ENCODE measurements at regions of chr2 and their contacts with region 1.

Region 1: DNA sequence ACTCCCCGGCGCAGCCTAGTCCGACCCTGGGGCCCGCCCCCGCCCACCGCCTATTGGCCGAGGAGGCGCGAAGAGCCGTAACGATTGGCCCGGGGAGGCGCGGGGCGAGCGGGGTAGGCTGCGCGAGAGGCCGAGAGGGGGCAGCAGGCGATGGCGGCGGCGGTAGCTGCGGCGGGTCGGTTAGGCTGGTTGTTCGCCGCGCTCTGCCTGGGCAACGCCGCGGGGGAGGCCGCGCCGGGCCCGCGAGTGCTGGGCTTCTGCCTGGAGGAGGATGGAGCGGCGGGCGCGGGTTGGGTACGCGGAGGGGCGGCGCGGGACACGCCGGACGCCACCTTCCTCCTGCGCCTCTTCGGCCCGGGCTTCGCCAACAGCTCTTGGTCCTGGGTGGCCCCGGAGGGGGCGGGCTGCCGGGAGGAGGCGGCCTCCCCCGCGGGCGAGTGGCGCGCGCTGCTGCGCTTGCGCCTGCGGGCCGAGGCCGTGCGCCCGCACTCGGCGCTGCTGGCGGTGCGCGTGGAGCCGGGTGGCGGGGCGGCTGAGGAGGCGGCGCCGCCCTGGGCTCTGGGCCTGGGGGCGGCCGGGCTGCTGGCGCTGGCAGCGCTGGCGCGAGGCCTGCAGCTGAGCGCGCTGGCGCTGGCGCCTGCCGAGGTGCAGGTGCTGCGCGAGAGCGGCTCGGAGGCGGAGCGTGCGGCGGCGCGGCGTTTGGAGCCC is at the start of gene CNNM3:
- DNase-seq: peak; percentile 93 to 97 (median 94)
- H3K4me3 ChIP-seq: peak within 1 kb of the TSS; percentile 82 to 83
- H3K4me3 Mint-ChIP-seq: peak within 1 kb of the TSS; percentile 93 to 97 (median 95)
- H3K27ac ChIP-seq: peak within 1 kb of the TSS; percentile 77
- H3K27ac Mint-ChIP-seq: peak within 1 kb of the TSS; percentile 74 to 96 (median 93)
- H3K4me1 ChIP-seq: peaks cover 57% of the 10 kb centered on the region
- H3K4me1 Mint-ChIP-seq: peaks cover 50 to 76% (median 61%) of the 10 kb centered on the region in 4 donors
- H3K27me3 ChIP-seq: no peaks in the 10 kb centered on the region
- H3K27me3 Mint-ChIP-seq: no peaks in the 10 kb centered on the region
- total RNA-seq, gene CNNM3: 55.1 to 57.4 TPM

Region 2: DNA sequence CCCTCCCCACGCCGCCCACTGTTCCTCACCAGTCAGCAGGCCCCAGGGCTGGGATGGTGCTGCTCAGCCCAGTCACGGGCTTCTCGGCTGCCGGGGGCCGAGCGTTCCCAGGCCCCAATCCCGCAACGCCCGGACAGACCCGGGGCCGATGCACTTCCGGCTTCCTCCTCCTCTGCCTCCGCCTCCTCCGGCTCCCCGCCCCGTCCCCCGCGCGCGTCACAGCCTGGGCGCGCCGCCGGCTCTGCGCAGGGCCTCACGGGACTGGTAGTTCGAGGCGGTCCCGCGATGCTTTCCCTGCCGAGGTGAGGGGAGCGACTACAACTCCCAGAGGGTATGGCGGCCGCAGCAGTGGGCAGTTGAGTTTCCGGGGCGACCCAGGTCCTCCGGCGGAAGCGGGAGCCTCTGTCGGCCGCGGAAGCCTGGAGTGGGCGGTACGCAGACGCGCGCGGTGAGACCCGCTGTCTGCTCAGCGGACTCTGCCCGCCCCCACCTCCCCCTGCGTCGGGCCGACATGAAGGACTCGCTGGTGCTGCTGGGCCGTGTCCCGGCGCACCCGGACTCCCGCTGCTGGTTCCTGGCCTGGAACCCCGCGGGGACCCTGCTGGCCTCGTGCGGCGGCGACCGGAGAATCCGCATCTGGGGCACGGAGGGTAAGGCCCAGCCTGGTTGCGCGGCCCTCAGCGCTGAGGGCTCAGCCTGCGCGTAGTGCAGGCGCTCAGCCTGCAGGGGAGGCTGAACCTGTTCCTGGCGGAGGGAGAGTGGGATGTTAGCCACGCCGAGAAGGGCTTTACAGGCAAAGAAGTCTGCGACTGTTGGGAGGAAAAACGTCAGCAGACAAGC is 550.2 kb before region 1 on chr2 and contains the starts of genes CIAO1 and TMEM127:
- CTCF ChIA-PET with region 1: no interaction called
- POLR2A ChIA-PET with region 1: no interaction called
- intact Hi-C with region 1: loop called (anchors 1 kb)
- DNase-seq: peak; percentile 97 to 98 (median 97)
- H3K4me3 ChIP-seq: peak within 1 kb of the TSS; percentile 85 to 97
- H3K4me3 Mint-ChIP-seq: peak within 1 kb of the TSS; percentile 91 to 99 (median 94)
- H3K27ac ChIP-seq: peak within 1 kb of the TSS; percentile 94
- H3K27ac Mint-ChIP-seq: peak within 1 kb of the TSS; percentile 80 to 99 (median 94)
- H3K4me1 ChIP-seq: peaks cover 49% of the 10 kb centered on the region
- H3K4me1 Mint-ChIP-seq: peaks cover 22 to 64% (median 48%) of the 10 kb centered on the region in 4 donors
- H3K27me3 ChIP-seq: no peaks in the 10 kb centered on the region
- H3K27me3 Mint-ChIP-seq: no peaks in the 10 kb centered on the region
- total RNA-seq, gene CIAO1: 78.3 to 87.3 TPM
- total RNA-seq, gene TMEM127: 45.1 to 45.6 TPM

Region 3: DNA sequence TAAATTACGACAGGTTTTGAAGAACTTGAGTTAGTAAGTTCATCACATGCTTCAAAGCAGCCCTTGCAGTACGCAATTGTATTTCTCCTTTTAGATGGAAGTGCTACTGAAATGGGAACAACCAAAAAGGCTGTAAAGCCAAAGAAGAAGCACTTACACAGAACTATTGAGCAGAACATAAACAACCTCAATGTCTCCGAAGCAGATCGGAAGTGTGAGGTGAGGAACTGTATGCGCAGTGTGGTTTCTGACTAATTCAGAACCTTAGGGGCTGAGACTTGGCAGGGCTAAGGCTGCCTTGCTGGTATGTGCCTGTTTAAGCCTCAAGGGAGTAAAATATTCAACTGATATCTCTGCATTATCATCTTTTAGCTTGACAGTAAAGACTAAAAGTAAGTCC is 472.3 kb before region 1 on chr2:
- CTCF ChIA-PET with region 1: no interaction called
- POLR2A ChIA-PET with region 1: no interaction called
- intact Hi-C with region 1: no loop called
- DNase-seq: peak; percentile 67 to 84 (median 72)
- H3K4me3 ChIP-seq: no peak overlapping the region
- H3K4me3 Mint-ChIP-seq: peak overlapping the region in 7 of 8 donors; percentile 15 to 81 (median 53)
- H3K27ac ChIP-seq: peak overlapping the region; percentile 68
- H3K27ac Mint-ChIP-seq: peak overlapping the region; percentile 82 to 96 (median 92)
- H3K4me1 ChIP-seq: peaks cover 55% of the 10 kb centered on the region
- H3K4me1 Mint-ChIP-seq: peaks cover 41 to 61% (median 47%) of the 10 kb centered on the region in 4 donors
- H3K27me3 ChIP-seq: no peaks in the 10 kb centered on the region
- H3K27me3 Mint-ChIP-seq: no peaks in the 10 kb centered on the region

Region 4: DNA sequence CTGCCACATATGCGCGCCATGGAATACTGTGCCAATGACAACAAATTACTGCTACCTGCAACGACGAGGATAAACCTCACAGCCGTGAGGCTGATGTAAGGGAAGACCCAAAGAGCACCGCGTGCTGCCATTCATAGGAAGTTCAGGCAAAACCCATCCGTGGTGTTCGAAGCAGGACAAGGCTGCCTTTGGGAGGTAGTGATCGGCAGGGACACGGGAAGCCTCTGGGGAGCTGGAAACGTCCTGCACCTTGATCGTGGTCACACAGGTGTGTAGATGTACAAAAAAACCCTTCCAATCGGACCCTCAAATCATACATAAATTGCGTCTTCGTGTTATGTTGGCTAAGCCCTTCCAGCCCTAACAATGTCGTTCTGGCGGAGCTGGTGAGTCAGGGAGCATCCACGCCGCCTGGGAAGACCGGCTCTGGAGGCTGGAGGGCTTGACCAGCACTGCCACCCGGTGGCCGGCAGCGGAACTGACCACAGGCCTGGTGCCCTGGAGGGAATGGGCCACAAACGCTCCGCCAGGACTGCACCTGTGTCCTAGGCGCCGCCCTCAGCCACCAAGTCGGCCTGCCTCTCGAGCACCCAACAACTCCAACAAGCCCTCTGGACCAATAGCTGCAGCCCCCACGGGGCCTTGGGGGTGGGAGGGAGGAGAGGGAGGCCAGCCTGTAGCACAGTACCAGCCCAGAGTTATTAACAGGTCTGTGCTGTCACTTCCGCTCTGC is 307.0 kb before region 1 on chr2:
- CTCF ChIA-PET with region 1: no interaction called
- POLR2A ChIA-PET with region 1: no interaction called
- intact Hi-C with region 1: no loop called
- DNase-seq: peak in 3 of 5 donors; percentile 21 to 45 (median 26)
- H3K4me3 ChIP-seq: no peak overlapping the region
- H3K4me3 Mint-ChIP-seq: peak overlapping the region in 4 of 8 donors; percentile 7 to 46 (median 20)
- H3K27ac ChIP-seq: no peak overlapping the region
- H3K27ac Mint-ChIP-seq: peak overlapping the region in 2 of 7 donors; percentile 9 to 66
- H3K4me1 ChIP-seq: peaks cover 10% of the 10 kb centered on the region
- H3K4me1 Mint-ChIP-seq: peaks cover 4 to 23% (median 13%) of the 10 kb centered on the region in 4 donors
- H3K27me3 ChIP-seq: no peaks in the 10 kb centered on the region
- H3K27me3 Mint-ChIP-seq: peaks cover 1 to 12% of the 10 kb centered on the region in 2 donors

Region 5: DNA sequence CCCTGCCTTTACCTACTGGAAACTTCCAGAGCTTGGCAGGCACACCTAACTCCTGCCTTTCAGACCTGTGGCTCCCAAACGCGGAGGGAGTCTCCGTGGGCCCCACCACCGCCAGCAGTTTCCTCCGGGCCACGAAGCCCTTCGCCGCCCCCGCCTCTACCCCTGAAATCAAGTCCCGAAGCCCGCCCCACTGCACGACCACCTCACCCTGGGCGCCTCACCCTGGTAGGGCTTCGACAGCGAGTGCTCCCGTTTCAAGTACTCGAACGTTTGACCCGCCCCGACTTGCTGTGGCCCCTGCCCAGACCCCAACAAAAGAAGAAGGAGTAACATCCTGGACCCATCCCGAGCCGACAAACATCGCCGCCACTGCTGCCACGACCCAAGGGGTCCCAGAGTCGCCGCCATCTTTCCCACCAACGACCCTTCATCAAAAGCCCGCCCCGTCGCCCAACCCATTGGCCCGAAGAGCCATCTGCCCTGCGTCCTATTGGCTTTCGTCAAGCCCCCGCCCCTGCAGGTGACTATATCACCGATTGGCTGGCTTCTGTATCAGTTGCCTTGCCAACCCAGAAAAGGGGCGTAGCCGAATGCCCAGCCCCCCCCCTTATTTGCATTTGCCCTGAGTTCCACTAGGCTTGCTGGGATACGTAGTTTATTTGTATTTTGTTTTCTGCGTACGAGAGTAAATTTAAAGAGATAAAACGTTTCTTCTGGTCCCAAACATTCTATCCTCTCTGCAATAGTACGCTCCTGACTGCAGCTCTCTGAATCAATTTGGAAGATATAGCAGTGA is 76.5 kb before region 1 on chr2 and contains the start of gene LMAN2L:
- CTCF ChIA-PET with region 1: no interaction called
- POLR2A ChIA-PET with region 1: interaction called, 3 read pairs
- intact Hi-C with region 1: loop called (anchors 1 kb)
- DNase-seq: peak; percentile 94 to 99 (median 98)
- H3K4me3 ChIP-seq: peak within 1 kb of the TSS; percentile 63 to 82
- H3K4me3 Mint-ChIP-seq: peak within 1 kb of the TSS; percentile 93 to 100 (median 98)
- H3K27ac ChIP-seq: peak within 1 kb of the TSS; percentile 75
- H3K27ac Mint-ChIP-seq: peak within 1 kb of the TSS; percentile 90 to 98 (median 97)
- H3K4me1 ChIP-seq: peaks cover 36% of the 10 kb centered on the region
- H3K4me1 Mint-ChIP-seq: peaks cover 24 to 53% (median 39%) of the 10 kb centered on the region in 4 donors
- H3K27me3 ChIP-seq: no peaks in the 10 kb centered on the region
- H3K27me3 Mint-ChIP-seq: no peaks in the 10 kb centered on the region
- total RNA-seq, gene LMAN2L: 10.1 to 12.6 TPM

Region 6: GRCh38 chr2:96801005-96801785 is 15.1 kb before region 1 on chr2:
- CTCF ChIA-PET with region 1: interaction called, 11 read pairs
- POLR2A ChIA-PET with region 1: interaction called, 104 read pairs
- intact Hi-C with region 1: loop called (anchors 1 kb)
- DNase-seq: peak; percentile 65 to 70 (median 65)
- H3K4me3 ChIP-seq: no peak overlapping the region
- H3K4me3 Mint-ChIP-seq: no peak overlapping the region
- H3K27ac ChIP-seq: no peak overlapping the region
- H3K27ac Mint-ChIP-seq: no peak overlapping the region
- H3K4me1 ChIP-seq: peaks cover 28% of the 10 kb centered on the region
- H3K4me1 Mint-ChIP-seq: peaks cover 3 to 7% (median 5%) of the 10 kb centered on the region in 4 donors
- H3K27me3 ChIP-seq: no peaks in the 10 kb centered on the region
- H3K27me3 Mint-ChIP-seq: no peaks in the 10 kb centered on the region

Region 7: DNA sequence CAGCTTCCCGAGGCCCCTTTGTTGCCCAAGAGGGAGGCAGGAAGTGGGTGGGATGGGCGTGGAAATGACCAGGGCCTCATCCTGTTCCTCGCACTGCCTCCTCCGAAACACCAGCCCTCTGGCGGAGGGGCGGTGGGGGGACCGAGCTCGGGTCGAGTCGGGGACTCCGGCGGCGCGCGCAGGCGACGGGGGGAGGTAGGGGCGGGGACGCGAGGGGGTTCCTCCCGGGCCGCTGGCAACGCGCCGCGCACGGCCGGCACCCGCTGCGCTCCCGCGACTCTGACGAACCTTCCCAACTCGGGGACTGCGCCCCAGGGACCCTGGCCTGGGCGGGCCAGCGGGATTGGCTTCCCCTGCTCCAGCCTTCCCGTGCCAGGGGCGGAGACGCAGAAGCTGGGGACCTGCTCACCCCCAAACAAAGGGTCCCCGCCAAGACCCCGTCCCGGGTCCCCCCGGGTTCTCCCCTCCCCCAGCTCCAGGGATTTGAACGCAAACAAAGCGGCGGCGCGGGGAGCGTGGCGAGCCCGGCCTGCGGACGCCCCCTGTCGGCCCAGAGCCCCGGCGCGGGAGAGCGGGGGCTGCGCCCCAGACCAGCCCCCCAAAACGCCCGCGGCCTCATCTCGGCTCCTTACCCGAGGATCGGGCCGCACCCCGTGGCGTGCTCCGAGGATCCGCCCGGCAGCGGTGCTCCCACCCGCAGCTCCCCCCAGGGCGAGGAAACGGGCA is 52.4 kb after region 1 on chr2:
- CTCF ChIA-PET with region 1: no interaction called
- POLR2A ChIA-PET with region 1: interaction called, 6 read pairs
- intact Hi-C with region 1: loop called (anchors 1 kb)
- DNase-seq: peak; percentile 50 to 72 (median 52)
- H3K4me3 ChIP-seq: peak overlapping the region; percentile 47 to 72
- H3K4me3 Mint-ChIP-seq: peak overlapping the region; percentile 69 to 91 (median 88)
- H3K27ac ChIP-seq: peak overlapping the region; percentile 68
- H3K27ac Mint-ChIP-seq: peak overlapping the region in 6 of 7 donors; percentile 79 to 94 (median 92)
- H3K4me1 ChIP-seq: peaks cover 39% of the 10 kb centered on the region
- H3K4me1 Mint-ChIP-seq: peaks cover 27 to 58% (median 42%) of the 10 kb centered on the region in 4 donors
- H3K27me3 ChIP-seq: no peaks in the 10 kb centered on the region
- H3K27me3 Mint-ChIP-seq: no peaks in the 10 kb centered on the region

Measured in CD4-positive, alpha-beta memory T cell (primary cell).